ENCODE measurements at regions of chr17 and their contacts with region 1.

Region 1: DNA sequence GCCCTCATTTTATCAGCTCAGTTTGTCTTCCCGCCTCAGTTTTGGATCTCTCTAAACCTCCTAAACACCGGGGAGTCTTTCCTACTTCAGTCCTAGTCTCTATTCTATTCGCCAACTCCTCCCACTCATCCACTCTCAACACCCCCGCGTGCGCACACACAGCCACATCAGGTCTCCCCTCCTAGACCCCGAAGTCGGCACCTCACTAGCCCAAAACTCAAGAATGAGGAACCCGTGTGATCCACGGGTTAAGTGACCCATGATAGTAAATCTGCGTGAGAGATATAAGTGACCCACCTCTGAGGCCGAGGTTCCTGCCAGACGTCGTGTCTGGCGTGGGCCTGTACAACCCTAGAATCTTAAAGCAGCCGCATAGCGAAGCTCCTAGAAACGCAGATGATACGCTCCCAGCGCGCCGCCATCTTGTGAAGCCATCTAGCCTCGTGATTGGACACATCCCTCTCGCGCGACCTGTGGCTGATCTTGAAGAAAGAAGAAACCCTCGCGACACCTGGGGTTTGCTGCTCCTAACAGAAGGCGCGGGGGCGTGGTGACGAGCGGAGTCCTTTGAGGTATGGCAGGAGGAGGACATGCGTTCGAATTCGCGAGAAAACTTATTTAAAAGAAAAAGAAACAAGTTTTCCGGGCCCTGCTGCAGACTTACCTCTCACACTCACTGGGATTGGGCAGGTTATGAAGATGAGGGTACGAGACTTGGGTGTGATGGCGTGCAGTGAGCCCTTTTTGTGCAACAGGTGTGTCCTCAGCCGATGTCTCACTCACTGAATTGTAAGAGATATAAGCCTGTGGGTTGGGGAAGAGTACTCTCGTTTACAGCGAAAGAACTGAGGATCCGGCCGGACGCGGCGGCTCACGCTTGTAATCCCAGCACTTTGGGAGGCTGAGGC is at the start of gene METTL16:
- DNase-seq: peak; percentile 99
- H3K4me3 ChIP-seq: peak within 1 kb of the TSS; percentile 58 to 75 (median 68)
- H3K27ac ChIP-seq: peak within 1 kb of the TSS; percentile 85 to 93 (median 89)
- H3K4me1 ChIP-seq: peaks cover 29 to 41% (median 36%) of the 10 kb centered on the region in 4 donors
- H3K27me3 ChIP-seq: no peaks in the 10 kb centered on the region
- CTCF ChIP-seq: no peak
- EP300 ChIP-seq: no peak
- POLR2A ChIP-seq: no peak
- total RNA-seq, gene METTL16: 18.9 to 28.8 (median 24.5) TPM

Region 2: DNA sequence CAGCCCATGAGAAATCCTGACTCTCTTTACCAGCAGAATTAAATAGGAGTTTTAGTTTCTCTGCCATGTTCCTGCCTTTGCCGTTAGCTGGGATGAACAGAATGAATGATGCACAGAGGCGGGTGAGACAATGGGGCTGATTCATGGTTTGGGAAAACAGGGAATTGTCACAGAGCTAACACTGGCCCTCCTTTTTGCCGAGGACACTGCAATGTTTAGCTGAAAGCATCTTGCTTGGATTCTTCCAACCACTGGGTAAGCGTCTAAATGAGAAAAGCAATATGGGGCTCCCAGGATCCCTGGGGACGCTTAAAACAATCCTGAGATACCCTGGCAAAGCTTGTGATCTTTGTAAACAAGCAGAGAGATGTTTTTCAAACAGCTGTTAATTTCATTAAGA is 68.9 kb after region 1 on chr17:
- intact Hi-C with region 1: loop called (anchors 10 kb)
- DNase-seq: no peak
- H3K4me3 ChIP-seq: no peak overlapping the region
- H3K27ac ChIP-seq: no peak overlapping the region
- H3K4me1 ChIP-seq: no peaks in the 10 kb centered on the region
- H3K27me3 ChIP-seq: peaks cover 0 to 4% (median 0%) of the 10 kb centered on the region in 4 donors
- CTCF ChIP-seq: no peak
- EP300 ChIP-seq: no peak
- POLR2A ChIP-seq: no peak